Activated CD8-positive, alpha-beta memory T cell treated with anti-CD3 and anti-CD28 coated beads, Interleukin-2, amount 10 ng/mL, durations not matched to agents 7 days and 5 days (primary cell): ENCODE measurements at regions of chr6 and their contacts with region 1.

Region 1: GRCh38 chr6:75296811-75297779 is 12.5 kb upstream of the TMEM30A start:
- DNase-seq: no peak
- ATAC-seq: peak; percentile 57
- H3K4me3 Mint-ChIP-seq: no peak overlapping the region
- H3K27ac Mint-ChIP-seq: no peak overlapping the region
- H3K4me1 Mint-ChIP-seq: peaks cover 4% of the 10 kb centered on the region
- H3K27me3 Mint-ChIP-seq: no peaks in the 10 kb centered on the region

Region 2: DNA sequence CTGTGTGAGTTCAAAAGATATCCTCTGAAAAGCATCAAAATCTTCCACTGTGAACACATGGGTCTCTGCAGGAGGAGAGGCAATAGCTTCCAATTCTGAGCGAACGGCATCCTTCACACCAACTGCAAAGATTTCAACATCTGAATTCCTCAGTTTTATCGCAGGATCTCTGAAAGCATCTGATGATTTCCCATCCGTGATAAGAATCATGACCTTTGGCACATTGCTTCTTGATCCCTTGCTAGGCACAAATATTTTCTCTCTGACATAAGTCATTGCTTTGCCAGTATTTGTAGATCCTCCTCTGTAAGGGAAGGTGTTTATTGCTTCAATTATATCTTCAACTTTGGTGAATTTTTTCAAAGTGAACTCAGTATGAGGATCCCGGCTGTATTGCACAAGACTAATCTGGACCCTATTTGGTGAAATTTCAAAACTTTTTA is 114.0 kb before region 1 on chr6:
- CTCF ChIA-PET with region 1: no interaction called
- DNase-seq: no peak
- ATAC-seq: no peak
- H3K4me3 Mint-ChIP-seq: no peak overlapping the region
- H3K27ac Mint-ChIP-seq: no peak overlapping the region
- H3K4me1 Mint-ChIP-seq: no peaks in the 10 kb centered on the region
- H3K27me3 Mint-ChIP-seq: peaks cover 2% of the 10 kb centered on the region

Region 3: GRCh38 chr6:75217193-75217592 is 79.9 kb before region 1 on chr6:
- CTCF ChIA-PET with region 1: no interaction called
- DNase-seq: no peak
- ATAC-seq: no peak
- H3K4me3 Mint-ChIP-seq: no peak overlapping the region
- H3K27ac Mint-ChIP-seq: no peak overlapping the region
- H3K4me1 Mint-ChIP-seq: peaks cover 7% of the 10 kb centered on the region
- H3K27me3 Mint-ChIP-seq: peaks cover 34% of the 10 kb centered on the region

Region 4: GRCh38 chr6:75524322-75524972 is 227.4 kb after region 1 on chr6:
- CTCF ChIA-PET with region 1: interaction called, 19 read pairs
- DNase-seq: no peak
- ATAC-seq: no peak
- H3K4me3 Mint-ChIP-seq: no peak overlapping the region
- H3K27ac Mint-ChIP-seq: no peak overlapping the region
- H3K4me1 Mint-ChIP-seq: no peaks in the 10 kb centered on the region
- H3K27me3 Mint-ChIP-seq: peaks cover 29% of the 10 kb centered on the region